GM12878 (cell line): ENCODE measurements at regions of chr11 and their contacts with region 1.

Region 1: DNA sequence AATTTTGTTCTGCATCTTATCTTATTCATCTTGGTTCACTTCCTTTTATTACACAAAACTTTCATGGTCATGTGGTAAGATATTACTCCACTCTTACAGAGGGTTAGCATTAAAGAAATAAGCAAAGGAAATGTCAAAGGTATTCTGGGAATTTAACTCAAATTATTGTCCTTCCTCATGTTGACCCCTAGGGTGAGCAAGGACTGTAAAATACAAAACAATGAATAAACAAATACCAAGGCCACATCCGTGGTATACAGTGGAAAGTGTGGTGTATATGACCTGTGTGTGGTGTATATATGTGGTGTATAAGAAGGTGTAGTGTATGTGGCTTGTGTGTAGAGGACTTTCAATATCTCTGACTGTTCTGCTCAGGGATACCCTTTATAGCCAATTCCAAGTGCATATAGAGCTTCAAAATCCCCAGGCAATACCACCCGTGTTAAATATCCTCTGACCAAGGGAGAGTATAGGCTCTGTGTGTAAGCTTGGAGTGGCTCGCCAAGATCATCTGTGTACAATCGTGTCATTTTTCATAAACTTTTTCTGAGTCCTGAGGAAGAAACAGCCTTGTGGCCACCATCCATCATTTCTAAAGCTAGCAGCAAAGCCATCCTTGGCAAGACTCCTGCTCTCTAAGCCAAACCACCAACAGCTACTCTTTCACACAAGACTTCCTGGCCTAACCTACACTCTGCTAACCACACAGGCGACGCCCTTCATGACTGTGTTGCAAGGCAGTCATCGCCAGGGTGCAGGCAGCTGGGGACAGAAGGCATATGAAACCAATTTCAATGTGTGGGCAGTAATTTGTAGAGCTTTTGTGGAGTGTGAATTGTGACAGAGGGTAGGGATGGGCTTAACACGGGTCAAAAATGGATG is 548.0 kb downstream of the ETS1 start:
- DNase-seq: no peak
- ATAC-seq: peak; percentile 84
- H3K4me3 ChIP-seq: no peak overlapping the region
- H3K27ac ChIP-seq: no peak overlapping the region
- H3K4me1 ChIP-seq: no peaks in the 10 kb centered on the region
- H3K27me3 ChIP-seq: peaks cover 0 to 6% of the 10 kb centered on the region in 2 experiments; a peak in 2 of 4 replicates
- CTCF ChIP-seq: no peak
- EP300 ChIP-seq: no peak
- POLR2A ChIP-seq: no peak
- RAD21 ChIP-seq: no peak

Region 2: DNA sequence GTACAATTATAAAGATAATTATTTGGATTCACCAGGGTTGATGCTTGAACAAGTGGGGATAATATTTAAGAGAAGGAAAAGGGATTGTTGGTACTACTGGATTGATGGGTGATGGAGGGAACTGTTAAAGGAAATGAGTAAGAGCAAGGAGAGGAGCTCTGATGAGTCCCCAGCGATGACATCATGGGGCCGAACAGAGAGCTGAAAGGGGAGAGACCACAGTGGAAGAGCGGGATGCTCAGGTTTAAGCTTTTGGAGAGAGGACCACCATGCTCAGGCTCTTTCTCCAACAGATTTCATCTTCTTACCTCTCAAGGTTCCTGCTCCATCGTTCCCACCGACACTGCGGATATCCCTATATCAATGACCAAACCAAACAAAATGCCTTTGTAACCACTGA is 20.7 kb before region 1 on chr11:
- CTCF ChIA-PET with region 1: no interaction called
- POLR2A ChIA-PET with region 1: no interaction called
- RAD21 ChIA-PET with region 1: no interaction called
- SMC1A ChIA-PET with region 1: no interaction called
- in situ Hi-C with region 1: no loop called
- intact Hi-C with region 1: no loop called
- DNase-seq: no peak
- ATAC-seq: no peak
- H3K4me3 ChIP-seq: no peak overlapping the region
- H3K27ac ChIP-seq: no peak overlapping the region
- H3K4me1 ChIP-seq: no peaks in the 10 kb centered on the region
- H3K27me3 ChIP-seq: no peaks in the 10 kb centered on the region; a peak in 1 of 4 replicates
- CTCF ChIP-seq: no peak
- EP300 ChIP-seq: no peak
- POLR2A ChIP-seq: no peak
- RAD21 ChIP-seq: no peak

Region 3: GRCh38 chr11:128279866-128280265 is 240.5 kb after region 1 on chr11:
- CTCF ChIA-PET with region 1: no interaction called
- POLR2A ChIA-PET with region 1: no interaction called
- RAD21 ChIA-PET with region 1: no interaction called
- SMC1A ChIA-PET with region 1: no interaction called
- in situ Hi-C with region 1: no loop called
- intact Hi-C with region 1: loop called (anchors 10 kb)
- DNase-seq: no peak
- ATAC-seq: no peak
- H3K4me3 ChIP-seq: no peak overlapping the region
- H3K27ac ChIP-seq: no peak overlapping the region
- H3K4me1 ChIP-seq: no peaks in the 10 kb centered on the region
- H3K27me3 ChIP-seq: peaks cover 4% of the 10 kb centered on the region in 2 experiments; a peak in 3 of 4 replicates
- CTCF ChIP-seq: no peak
- EP300 ChIP-seq: no peak
- POLR2A ChIP-seq: no peak
- RAD21 ChIP-seq: no peak

Region 4: GRCh38 chr11:128848815-128849455 is 809.6 kb after region 1 on chr11:
- CTCF ChIA-PET with region 1: no interaction called
- POLR2A ChIA-PET with region 1: no interaction called
- RAD21 ChIA-PET with region 1: no interaction called
- SMC1A ChIA-PET with region 1: no interaction called
- in situ Hi-C with region 1: no loop called
- intact Hi-C with region 1: loop called (anchors 5 kb)
- DNase-seq: no peak
- ATAC-seq: peak; percentile 100
- H3K4me3 ChIP-seq: no peak overlapping the region
- H3K27ac ChIP-seq: no peak overlapping the region
- H3K4me1 ChIP-seq: peaks cover 4% of the 10 kb centered on the region; the same call in 1 of the 2 replicates
- H3K27me3 ChIP-seq: no peaks in the 10 kb centered on the region
- CTCF ChIP-seq: peak; percentile 81 to 91 (median 88)
- EP300 ChIP-seq: no peak
- POLR2A ChIP-seq: no peak
- RAD21 ChIP-seq: peak; percentile 68